Heart right ventricle (tissue), 16 donors: ENCODE measurements at regions of chr3 and their contacts with region 1.

Region 1: DNA sequence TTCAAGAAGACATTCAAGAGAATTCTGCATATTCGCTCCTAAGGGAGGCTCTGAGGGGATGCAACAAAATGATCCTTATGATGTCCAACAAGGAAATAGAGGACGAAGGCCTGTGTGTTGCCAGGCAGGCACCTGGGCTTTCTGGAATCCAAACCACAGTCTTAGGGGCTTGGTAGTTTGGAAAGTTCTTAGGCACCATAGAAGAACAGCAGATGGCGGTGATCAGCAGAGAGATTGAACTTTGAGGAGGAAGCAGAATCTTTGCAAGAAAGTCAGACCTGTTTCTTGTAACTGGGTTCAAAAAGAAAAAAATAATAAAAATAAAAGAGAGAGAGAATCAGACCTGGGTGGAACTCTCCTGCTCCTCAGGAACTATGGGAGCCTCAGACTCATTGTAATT is 11.7 kb upstream of the ATG7 start:
- DNase-seq: no peak
- ATAC-seq: no peak
- H3K4me3 ChIP-seq: no peak overlapping the region
- H3K27ac ChIP-seq: no peak overlapping the region
- H3K4me1 ChIP-seq: no peaks in the 10 kb centered on the region
- H3K27me3 ChIP-seq: peaks cover 0 to 13% (median 0%) of the 10 kb centered on the region in 7 donors
- CTCF ChIP-seq: no peak

Region 2: DNA sequence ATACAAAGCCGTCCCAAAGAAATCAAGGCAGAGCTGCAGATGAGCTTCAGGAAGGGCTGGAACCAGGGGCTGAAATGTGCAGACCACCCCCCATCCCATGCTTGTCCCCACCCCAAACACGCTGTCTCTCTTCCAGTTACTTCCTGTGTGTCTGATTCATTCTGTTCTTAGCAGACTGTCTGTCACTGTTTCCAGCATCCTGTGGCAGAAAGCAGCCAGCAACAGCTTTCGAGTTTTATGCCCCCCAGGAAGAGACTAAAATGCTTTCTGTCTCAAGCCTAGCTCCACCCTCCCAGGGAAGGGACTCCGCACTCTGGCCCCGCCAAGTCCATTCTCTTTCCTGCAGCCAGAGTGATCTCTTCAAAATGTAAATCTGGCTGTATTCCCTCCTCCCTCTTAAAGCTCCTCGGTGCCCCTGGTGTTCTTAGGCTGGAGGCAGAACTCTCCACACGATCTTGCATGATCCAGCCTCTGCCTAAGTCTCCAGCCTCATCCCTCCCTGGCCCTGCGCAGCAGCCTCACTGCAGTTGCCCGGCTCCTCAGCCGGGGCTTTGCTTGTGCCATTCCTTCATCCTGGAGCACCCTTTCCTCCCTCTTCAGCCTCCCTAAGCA is 64.6 kb before region 1 on chr3:
- intact Hi-C with region 1: no loop called
- DNase-seq: no peak
- ATAC-seq: peak in 2 of 8 donors; percentile 12 to 52
- H3K4me3 ChIP-seq: no peak overlapping the region
- H3K27ac ChIP-seq: peak overlapping the region in 1 of 10 donors; percentile 47
- H3K4me1 ChIP-seq: peaks cover 0 to 45% (median 8%) of the 10 kb centered on the region in 9 donors
- H3K27me3 ChIP-seq: peaks cover 0 to 6% (median 0%) of the 10 kb centered on the region in 7 donors
- CTCF ChIP-seq: no peak

Region 3: DNA sequence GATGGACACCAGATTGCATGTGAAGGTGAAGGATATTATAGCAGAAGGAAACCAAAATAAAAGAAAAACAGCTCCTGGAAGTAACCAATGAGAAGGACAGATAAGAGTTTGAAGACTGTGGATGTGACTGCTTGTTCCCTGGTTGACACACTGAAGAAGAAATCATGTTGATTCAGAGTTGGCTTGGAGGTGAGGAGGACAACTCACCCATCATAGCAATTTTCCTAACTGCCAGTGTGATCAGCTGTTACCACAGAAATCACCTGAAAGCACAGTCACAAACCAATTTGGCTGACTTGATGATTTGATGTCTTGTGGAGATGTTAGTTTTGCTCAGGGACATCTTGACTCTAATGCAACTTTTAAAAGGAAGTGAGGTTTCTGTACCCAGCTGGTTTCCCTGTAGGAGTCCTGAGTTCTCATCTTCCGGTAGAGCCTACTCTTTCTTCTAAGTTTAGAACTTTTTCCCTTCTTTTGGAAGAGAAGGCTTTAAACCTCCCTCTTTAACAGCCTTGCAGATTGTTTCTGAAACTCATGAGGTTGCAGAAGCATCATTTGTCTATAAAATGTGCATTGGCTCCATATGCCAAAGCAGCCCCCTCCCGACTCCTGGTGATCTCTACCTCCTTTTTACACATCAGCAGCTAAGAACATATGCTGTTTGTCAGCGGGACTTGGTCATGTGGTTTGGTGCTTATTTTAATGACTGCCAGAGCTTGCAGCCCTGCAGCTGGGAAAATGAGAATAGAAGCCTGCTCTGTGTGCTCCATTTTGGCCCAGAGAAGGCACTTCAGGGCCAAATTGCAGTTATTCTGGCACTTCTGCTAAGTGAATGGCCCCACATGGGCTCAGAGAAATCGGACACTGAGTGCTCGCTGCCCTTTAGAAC is 22.0 kb after region 1 on chr3:
- intact Hi-C with region 1: loop called in 1 of 10 experiments (anchors 2 kb)
- DNase-seq: peak; percentile 24 to 49
- ATAC-seq: peak; percentile 81 to 93 (median 90)
- H3K4me3 ChIP-seq: peak overlapping the region in 2 of 10 donors; percentile 0 to 13
- H3K27ac ChIP-seq: peak overlapping the region in 9 of 10 donors; percentile 13 to 78 (median 49)
- H3K4me1 ChIP-seq: peaks cover 10 to 72% (median 30%) of the 10 kb centered on the region in 9 donors
- H3K27me3 ChIP-seq: no peaks in the 10 kb centered on the region
- CTCF ChIP-seq: no peak